ENCODE measurements at regions of chr3 and their contacts with region 1.

Region 1: GRCh38 chr3:50227390-50228183 is 8.4 kb upstream of the GNAI2 start:
- DNase-seq: peak; percentile 94
- ATAC-seq: peak; percentile 89
- H3K4me3 Mint-ChIP-seq: peak overlapping the region; percentile 91
- H3K27ac Mint-ChIP-seq: peak overlapping the region; percentile 90
- H3K4me1 Mint-ChIP-seq: peaks cover 34% of the 10 kb centered on the region
- H3K27me3 Mint-ChIP-seq: peaks cover 16% of the 10 kb centered on the region

Region 2: GRCh38 chr3:50121416-50122032 is 106.1 kb before region 1 on chr3:
- CTCF ChIA-PET with region 1: interaction called, 23 read pairs
- POLR2A ChIA-PET with region 1: no interaction called
- DNase-seq: peak; percentile 81
- ATAC-seq: peak; percentile 86
- H3K4me3 Mint-ChIP-seq: no peak overlapping the region
- H3K27ac Mint-ChIP-seq: no peak overlapping the region
- H3K4me1 Mint-ChIP-seq: no peaks in the 10 kb centered on the region
- H3K27me3 Mint-ChIP-seq: no peaks in the 10 kb centered on the region

Region 3: GRCh38 chr3:50267280-50267913 is 39.8 kb after region 1 on chr3:
- CTCF ChIA-PET with region 1: interaction called, 24 read pairs
- POLR2A ChIA-PET with region 1: interaction called, 3 read pairs
- DNase-seq: no peak
- ATAC-seq: no peak
- H3K4me3 Mint-ChIP-seq: no peak overlapping the region
- H3K27ac Mint-ChIP-seq: no peak overlapping the region
- H3K4me1 Mint-ChIP-seq: peaks cover 6% of the 10 kb centered on the region
- H3K27me3 Mint-ChIP-seq: peaks cover 18% of the 10 kb centered on the region

Region 4: DNA sequence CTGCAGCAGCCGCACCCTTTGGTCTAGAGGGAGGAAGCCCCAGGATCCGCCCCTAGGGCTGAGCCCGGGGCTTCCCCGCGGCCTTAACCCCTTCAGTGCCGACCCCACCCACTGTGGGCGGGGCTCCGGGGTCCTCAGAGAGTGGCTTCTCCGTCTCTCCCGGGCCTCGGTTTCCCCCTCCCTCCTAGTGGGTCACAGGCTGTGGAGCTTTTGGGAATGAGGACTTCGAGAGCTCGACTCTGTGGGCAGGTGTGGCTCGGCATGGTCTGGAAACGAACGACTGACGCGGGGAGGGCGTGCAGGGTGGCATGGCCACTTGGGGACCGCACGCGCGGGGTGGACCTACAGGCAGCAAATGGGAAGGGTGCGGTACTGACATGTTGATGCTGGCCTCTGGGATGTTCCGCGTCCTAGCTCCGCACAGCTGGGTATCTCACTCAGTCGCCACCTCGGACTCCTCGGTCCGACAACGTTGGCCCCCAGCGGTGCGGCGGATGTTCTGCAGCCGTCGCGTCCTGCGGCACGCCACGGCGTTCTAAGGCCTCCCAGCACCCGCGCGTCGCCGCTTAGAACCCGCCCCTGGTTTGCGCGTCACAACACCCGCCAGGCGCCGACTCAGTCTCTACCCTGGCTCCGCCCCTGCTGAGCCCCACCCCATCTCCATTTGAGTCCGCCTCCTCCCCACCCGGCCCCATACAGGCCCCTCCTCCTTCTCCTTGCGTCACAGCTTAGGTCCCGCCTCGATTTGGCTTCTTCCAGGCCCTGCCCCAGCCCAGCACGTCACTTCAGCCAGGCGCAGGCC is 71.5 kb after region 1 on chr3 and contains the starts of genes HYAL3 and NAA80:
- CTCF ChIA-PET with region 1: interaction called, 11 read pairs
- POLR2A ChIA-PET with region 1: interaction called, 6 read pairs
- DNase-seq: peak; percentile 100
- ATAC-seq: peak; percentile 87
- H3K4me3 Mint-ChIP-seq: peak within 1 kb of the TSS; percentile 97
- H3K27ac Mint-ChIP-seq: peak within 1 kb of the TSS; percentile 99
- H3K4me1 Mint-ChIP-seq: peaks cover 32% of the 10 kb centered on the region
- H3K27me3 Mint-ChIP-seq: no peaks in the 10 kb centered on the region
- total RNA-seq, gene HYAL3: 9.7 to 12.7 TPM
- total RNA-seq, gene NAA80: 26.8 to 28.5 TPM